Heart left ventricle (tissue), 16 donors: ENCODE measurements at regions of chr7 and their contacts with region 1.

Region 1: DNA sequence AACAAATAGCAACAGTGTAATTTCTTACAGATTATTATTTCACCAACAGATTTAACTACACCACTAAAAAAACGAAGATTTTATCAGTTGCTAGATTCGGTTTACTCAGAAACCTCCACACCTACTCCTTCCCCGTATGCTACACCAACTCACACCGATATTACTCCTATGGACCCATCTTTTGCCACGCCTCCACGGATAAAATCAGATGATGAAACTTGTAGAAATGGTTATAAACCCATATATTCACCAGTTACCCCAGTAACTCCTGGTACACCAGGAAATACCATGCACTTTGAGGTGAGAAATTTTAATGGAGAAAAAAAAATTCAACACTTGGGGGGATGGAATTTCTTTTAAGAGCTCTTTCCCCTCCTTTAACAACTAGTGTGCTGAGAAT is 92.5 kb downstream of the KMT2E start:
- DNase-seq: no peak
- ATAC-seq: no peak
- H3K4me3 ChIP-seq: no peak overlapping the region
- H3K27ac ChIP-seq: no peak overlapping the region
- H3K4me1 ChIP-seq: peaks cover 0 to 19% (median 2%) of the 10 kb centered on the region in 12 donors
- H3K27me3 ChIP-seq: no peaks in the 10 kb centered on the region
- CTCF ChIP-seq: no peak
- POLR2A ChIP-seq: no peak

Region 2: GRCh38 chr7:105073143-105073542 is 33.3 kb before region 1 on chr7:
- intact Hi-C with region 1: loop called in 1 of 10 experiments (anchors 5 kb)
- DNase-seq: no peak
- ATAC-seq: no peak
- H3K4me3 ChIP-seq: no peak overlapping the region
- H3K27ac ChIP-seq: no peak overlapping the region
- H3K4me1 ChIP-seq: peaks cover 0 to 7% (median 0%) of the 10 kb centered on the region in 12 donors
- H3K27me3 ChIP-seq: no peaks in the 10 kb centered on the region
- CTCF ChIP-seq: no peak
- POLR2A ChIP-seq: no peak